ENCODE measurements at regions of chr22 and their contacts with region 1.

Region 1: GRCh38 chr22:27241430-27242321 is 559.9 kb downstream of the MN1 start:
- DNase-seq: peak; percentile 85 to 86
- ATAC-seq: peak; percentile 67
- H3K4me3 ChIP-seq: no peak overlapping the region
- H3K27ac ChIP-seq: peak overlapping the region in 1 of 2 donors; percentile 66
- H3K4me1 ChIP-seq: peaks cover 0 to 2% of the 10 kb centered on the region in 2 donors
- H3K27me3 ChIP-seq: no peaks in the 10 kb centered on the region

Region 2: DNA sequence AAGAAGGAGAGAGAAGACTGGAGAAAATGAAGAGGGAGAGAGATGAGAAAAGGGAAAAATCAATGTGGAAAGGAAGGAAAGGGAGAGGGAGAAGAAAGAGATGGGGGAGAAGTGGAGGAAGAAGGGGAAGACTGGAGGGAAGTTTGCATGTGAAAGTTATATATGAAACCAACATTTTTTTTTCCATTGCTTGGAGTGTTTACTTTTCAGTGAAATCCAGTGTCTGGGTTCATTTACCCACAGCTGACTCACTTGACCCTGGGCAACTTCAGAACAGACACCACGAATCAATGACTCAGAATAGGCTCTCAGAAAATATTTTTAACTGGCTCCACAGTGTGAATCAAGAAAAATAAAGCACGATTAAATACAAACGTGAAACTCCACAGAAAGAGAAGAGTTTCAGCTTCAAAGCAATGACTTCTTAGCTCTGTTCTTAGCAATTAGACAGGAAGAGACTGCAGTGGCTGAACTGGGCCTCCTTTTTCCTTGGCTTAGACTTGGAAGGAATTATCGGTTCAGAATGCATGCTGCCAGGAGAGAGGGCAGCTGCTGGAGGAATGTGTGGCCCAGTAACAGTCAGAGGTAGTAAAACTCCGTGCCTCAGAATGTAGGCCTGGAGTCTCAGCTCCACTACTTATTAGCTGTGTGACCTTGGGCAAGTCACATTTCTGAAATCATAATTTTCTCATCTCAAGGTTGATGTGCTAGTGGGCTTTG is 346.8 kb before region 1 on chr22:
- intact Hi-C with region 1: loop called in 1 of 2 experiments (anchors 10 kb)
- DNase-seq: no peak
- ATAC-seq: peak; percentile 68
- H3K4me3 ChIP-seq: no peak overlapping the region
- H3K27ac ChIP-seq: peak overlapping the region; percentile 92 to 94
- H3K4me1 ChIP-seq: peaks cover 2 to 10% of the 10 kb centered on the region in 2 donors
- H3K27me3 ChIP-seq: no peaks in the 10 kb centered on the region

Region 3: DNA sequence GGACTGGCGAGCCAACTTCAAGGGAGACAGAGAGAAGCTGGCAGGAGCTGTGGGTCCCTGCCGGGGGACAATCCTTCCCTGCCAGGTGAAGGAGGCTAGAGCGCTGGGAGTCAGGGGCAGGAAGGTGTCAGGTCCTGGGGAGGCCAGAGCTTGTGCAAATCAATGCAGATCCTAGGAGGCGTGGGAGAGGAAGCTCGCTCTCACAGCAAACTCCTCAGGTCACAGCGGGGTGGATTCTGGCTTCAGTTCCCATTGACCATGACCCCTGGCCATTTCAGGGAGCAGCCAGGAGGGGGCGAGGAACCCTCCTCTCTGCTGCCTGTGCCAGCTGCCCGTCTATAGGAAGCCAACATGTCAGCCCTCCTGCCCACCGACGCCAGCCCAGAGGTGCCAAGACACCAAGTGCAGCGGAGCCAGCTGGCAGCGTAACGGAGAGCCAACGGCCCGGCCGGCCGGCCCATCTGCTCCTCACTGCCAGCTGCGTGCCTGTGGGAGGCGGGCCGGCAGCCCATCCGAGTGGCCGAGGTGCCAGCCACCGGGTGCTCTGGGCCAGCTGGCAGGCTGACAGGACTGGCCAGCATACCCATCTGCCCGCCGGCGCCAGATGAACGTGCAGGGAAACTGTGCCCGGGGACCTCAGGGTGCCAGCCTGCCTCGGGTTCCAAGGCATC is 209.4 kb before region 1 on chr22:
- intact Hi-C with region 1: loop called in 1 of 2 experiments (anchors 10 kb)
- DNase-seq: peak; percentile 83 to 91
- ATAC-seq: peak; percentile 84
- H3K4me3 ChIP-seq: no peak overlapping the region
- H3K27ac ChIP-seq: peak overlapping the region in 1 of 2 donors; percentile 46
- H3K4me1 ChIP-seq: peaks cover 0 to 1% of the 10 kb centered on the region in 2 donors
- H3K27me3 ChIP-seq: no peaks in the 10 kb centered on the region

Region 4: GRCh38 chr22:27311698-27312550 is 70.2 kb after region 1 on chr22:
- intact Hi-C with region 1: no loop called
- DNase-seq: no peak
- ATAC-seq: no peak
- H3K4me3 ChIP-seq: no peak overlapping the region
- H3K27ac ChIP-seq: no peak overlapping the region
- H3K4me1 ChIP-seq: no peaks in the 10 kb centered on the region
- H3K27me3 ChIP-seq: no peaks in the 10 kb centered on the region

Region 5: GRCh38 chr22:27331526-27332281 is 90.0 kb after region 1 on chr22:
- intact Hi-C with region 1: loop called in 1 of 2 experiments (anchors 10 kb)
- DNase-seq: peak; percentile 83
- ATAC-seq: peak; percentile 73
- H3K4me3 ChIP-seq: no peak overlapping the region
- H3K27ac ChIP-seq: no peak overlapping the region
- H3K4me1 ChIP-seq: no peaks in the 10 kb centered on the region
- H3K27me3 ChIP-seq: no peaks in the 10 kb centered on the region

Measured in aorta (tissue), 5 donors.